ENCODE measurements at regions of chr12 and their contacts with region 1.

Region 1: GRCh38 chr12:68686595-68687521 is at the start of gene NUP107:
- DNase-seq: peak; percentile 98
- H3K4me3 Mint-ChIP-seq: peak within 1 kb of the TSS; percentile 98
- H3K27ac Mint-ChIP-seq: peak within 1 kb of the TSS; percentile 96
- H3K4me1 Mint-ChIP-seq: peaks cover 30% of the 10 kb centered on the region
- H3K27me3 Mint-ChIP-seq: no peaks in the 10 kb centered on the region
- total RNA-seq, gene NUP107: 128 TPM

Region 2: DNA sequence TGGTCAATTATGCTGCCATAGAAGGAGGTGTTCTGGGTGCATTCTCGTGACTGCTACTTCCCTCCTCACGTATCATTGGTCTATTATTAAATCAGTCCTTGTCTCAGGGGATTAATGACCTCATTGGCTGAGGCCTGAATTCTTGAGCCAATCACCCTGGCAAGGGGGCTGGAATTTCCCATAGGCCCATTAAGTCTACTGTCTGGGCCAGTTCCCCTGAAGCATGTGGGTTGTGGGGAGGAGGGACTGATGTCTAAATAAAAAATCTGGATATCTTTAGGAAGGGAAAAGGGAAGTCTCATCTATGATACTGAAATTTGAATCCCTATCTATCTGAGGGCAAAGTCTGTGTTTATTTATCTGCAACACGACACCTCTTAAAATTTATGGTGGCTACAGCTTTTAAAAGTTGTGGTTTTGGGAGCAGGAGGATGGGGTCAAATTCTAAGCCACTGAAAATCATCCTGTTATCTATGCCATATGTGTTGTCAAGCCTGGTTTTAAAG is 966.5 kb before region 1 on chr12:
- CTCF ChIA-PET with region 1: no interaction called
- POLR2A ChIA-PET with region 1: no interaction called
- intact Hi-C with region 1: no loop called
- DNase-seq: no peak
- H3K4me3 Mint-ChIP-seq: no peak overlapping the region
- H3K27ac Mint-ChIP-seq: no peak overlapping the region
- H3K4me1 Mint-ChIP-seq: no peaks in the 10 kb centered on the region
- H3K27me3 Mint-ChIP-seq: no peaks in the 10 kb centered on the region

Region 3: GRCh38 chr12:68331869-68332727 is 354.8 kb before region 1 on chr12 and contains the start of gene MDM1:
- CTCF ChIA-PET with region 1: no interaction called
- POLR2A ChIA-PET with region 1: interaction called, 3 read pairs
- intact Hi-C with region 1: loop called (anchors 1 kb)
- DNase-seq: peak; percentile 97
- H3K4me3 Mint-ChIP-seq: peak within 1 kb of the TSS; percentile 85
- H3K27ac Mint-ChIP-seq: peak within 1 kb of the TSS; percentile 71
- H3K4me1 Mint-ChIP-seq: peaks cover 31% of the 10 kb centered on the region
- H3K27me3 Mint-ChIP-seq: peaks cover 2% of the 10 kb centered on the region
- total RNA-seq, gene MDM1: 13.8 to 15.6 TPM

Region 4: GRCh38 chr12:68451261-68452077 is 235.4 kb before region 1 on chr12:
- CTCF ChIA-PET with region 1: no interaction called
- POLR2A ChIA-PET with region 1: no interaction called
- intact Hi-C with region 1: loop called (anchors 1 kb)
- DNase-seq: peak; percentile 70
- H3K4me3 Mint-ChIP-seq: peak overlapping the region; percentile 33
- H3K27ac Mint-ChIP-seq: peak overlapping the region; percentile 95
- H3K4me1 Mint-ChIP-seq: peaks cover 85% of the 10 kb centered on the region
- H3K27me3 Mint-ChIP-seq: no peaks in the 10 kb centered on the region

Region 5: GRCh38 chr12:68497702-68498101 is 189.2 kb before region 1 on chr12:
- CTCF ChIA-PET with region 1: no interaction called
- POLR2A ChIA-PET with region 1: no interaction called
- intact Hi-C with region 1: loop called (anchors 1 kb)
- DNase-seq: peak; percentile 24
- H3K4me3 Mint-ChIP-seq: peak overlapping the region; percentile 57
- H3K27ac Mint-ChIP-seq: peak overlapping the region; percentile 92
- H3K4me1 Mint-ChIP-seq: peaks cover 29% of the 10 kb centered on the region
- H3K27me3 Mint-ChIP-seq: no peaks in the 10 kb centered on the region

Region 6: DNA sequence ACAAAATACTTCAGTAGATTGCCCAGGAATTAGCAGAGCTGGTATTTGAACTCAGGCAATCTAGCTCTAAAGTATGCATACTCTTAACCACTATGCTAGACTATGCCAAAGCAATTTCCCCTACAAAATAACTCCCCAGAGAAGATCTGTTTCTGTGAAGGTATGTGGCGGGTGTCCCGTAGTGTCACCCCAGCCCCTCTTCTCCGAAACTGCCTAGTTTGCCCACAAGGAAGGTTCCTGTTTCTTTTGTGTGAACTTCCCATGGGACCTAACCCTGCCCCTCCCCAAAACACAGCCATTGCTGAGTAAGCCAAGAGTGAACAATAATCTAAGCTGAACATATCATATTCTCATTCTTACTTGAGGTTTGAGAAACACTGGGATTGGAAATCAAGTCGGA is 91.6 kb before region 1 on chr12:
- CTCF ChIA-PET with region 1: no interaction called
- POLR2A ChIA-PET with region 1: no interaction called
- intact Hi-C with region 1: no loop called
- DNase-seq: no peak
- H3K4me3 Mint-ChIP-seq: no peak overlapping the region
- H3K27ac Mint-ChIP-seq: peak overlapping the region; percentile 19
- H3K4me1 Mint-ChIP-seq: peaks cover 43% of the 10 kb centered on the region
- H3K27me3 Mint-ChIP-seq: no peaks in the 10 kb centered on the region

Region 7: DNA sequence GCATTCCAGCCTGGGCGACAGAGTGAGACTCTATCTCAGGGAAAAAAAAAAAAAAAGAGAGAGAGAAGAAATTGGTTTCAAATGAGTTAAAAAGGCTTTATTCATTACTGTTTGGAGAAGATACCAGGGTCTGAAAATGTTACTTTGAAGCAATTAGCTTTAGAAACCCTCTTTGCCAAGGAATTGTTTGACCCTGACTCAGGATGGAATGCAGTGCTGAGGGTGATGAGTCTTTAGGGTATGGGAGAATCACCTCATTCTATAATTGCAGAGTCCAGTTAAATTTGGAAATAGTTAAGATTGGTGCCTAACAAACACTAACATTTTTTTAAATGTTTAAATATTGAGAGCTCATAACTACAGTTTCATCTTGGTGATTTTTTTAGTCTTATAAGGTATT is 62.9 kb before region 1 on chr12:
- CTCF ChIA-PET with region 1: no interaction called
- POLR2A ChIA-PET with region 1: no interaction called
- intact Hi-C with region 1: no loop called
- DNase-seq: no peak
- H3K4me3 Mint-ChIP-seq: no peak overlapping the region
- H3K27ac Mint-ChIP-seq: no peak overlapping the region
- H3K4me1 Mint-ChIP-seq: peaks cover 80% of the 10 kb centered on the region
- H3K27me3 Mint-ChIP-seq: no peaks in the 10 kb centered on the region

Region 8: DNA sequence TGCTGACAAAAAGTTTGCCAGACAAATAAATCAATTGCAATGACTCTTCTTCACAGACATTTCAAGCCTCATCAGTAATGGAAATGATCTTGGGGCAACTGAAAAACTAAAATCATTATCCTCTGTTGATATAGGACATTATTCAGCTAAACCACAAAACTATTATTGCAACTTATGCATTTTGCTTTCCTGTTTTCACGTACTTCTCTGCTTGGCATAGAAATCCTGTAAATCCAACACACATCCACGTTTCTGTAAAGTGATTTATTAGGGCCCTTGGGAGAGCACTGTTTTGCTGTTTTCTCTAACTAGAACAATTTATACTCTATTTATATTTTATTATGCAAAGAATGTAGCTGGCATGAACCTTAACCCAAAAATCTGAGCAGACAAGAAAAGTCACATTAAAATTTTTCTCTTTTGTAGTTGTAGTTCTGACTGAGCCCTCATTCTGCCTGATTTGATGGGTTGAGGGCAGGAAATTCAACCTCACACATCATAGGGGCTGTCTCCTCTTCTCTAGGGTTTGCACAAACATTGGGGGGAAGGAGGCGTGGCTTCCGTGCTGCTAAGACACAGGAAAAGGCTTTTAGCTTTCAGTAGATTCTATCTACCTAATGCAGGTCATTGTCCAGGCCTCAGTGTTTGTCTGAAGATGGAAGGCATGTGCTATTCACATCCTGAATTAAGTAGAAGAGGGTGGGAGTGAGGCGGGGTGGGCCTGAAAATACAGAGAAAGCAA is 11.6 kb before region 1 on chr12:
- CTCF ChIA-PET with region 1: no interaction called
- POLR2A ChIA-PET with region 1: no interaction called
- intact Hi-C with region 1: loop called (anchors 1 kb)
- DNase-seq: peak; percentile 76
- H3K4me3 Mint-ChIP-seq: peak overlapping the region; percentile 40
- H3K27ac Mint-ChIP-seq: peak overlapping the region; percentile 89
- H3K4me1 Mint-ChIP-seq: peaks cover 33% of the 10 kb centered on the region
- H3K27me3 Mint-ChIP-seq: no peaks in the 10 kb centered on the region

Region 9: DNA sequence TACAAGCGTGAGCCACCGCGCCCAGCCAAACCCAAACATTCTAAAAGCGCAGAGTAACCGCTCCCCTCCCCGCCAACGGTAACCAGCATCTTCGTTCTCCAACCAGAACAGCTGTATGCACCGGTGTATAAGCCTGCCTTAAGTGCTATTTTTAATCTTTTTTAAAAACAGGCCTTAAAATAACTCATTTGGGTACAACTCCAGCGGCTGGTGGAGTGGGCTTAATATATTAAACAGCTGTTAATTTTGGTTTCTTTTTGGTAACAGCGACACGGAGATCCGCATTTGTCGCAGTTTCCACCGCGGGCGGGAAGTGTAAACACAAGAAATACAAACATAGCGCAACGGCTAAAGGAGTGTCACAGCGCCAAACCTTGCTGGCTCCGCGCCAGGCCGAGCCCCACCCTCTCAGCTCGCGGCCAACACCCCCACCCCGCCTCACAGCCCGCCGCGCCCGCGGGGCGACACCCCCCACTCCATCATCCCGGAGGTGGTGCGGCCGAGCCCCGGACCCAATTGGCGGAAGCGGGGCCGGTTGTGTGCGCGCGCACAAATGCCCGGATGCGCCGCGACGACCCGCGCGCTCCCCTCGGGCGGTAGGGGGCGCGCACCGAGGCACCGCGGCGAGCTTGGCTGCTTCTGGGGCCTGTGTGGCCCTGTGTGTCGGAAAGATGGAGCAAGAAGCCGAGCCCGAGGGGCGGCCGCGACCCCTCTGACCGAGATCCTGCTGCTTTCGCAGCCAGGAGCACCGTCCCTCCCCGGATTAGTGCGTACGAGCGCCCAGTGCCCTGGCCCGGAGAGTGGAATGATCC is 120.9 kb after region 1 on chr12 and contains the start of gene MDM2:
- CTCF ChIA-PET with region 1: no interaction called
- POLR2A ChIA-PET with region 1: no interaction called
- intact Hi-C with region 1: loop called (anchors 2 kb)
- DNase-seq: peak; percentile 97
- H3K4me3 Mint-ChIP-seq: peak within 1 kb of the TSS; percentile 93
- H3K27ac Mint-ChIP-seq: peak within 1 kb of the TSS; percentile 99
- H3K4me1 Mint-ChIP-seq: peaks cover 28% of the 10 kb centered on the region
- H3K27me3 Mint-ChIP-seq: no peaks in the 10 kb centered on the region
- total RNA-seq, gene MDM2: 125 to 136 TPM

Measured in activated CD4-positive, alpha-beta memory T cell treated with anti-CD3 and anti-CD28 coated beads for 36 hours (primary cell).